GM12878 (cell line): ENCODE measurements at regions of chr19 and their contacts with region 1.

Region 1: DNA sequence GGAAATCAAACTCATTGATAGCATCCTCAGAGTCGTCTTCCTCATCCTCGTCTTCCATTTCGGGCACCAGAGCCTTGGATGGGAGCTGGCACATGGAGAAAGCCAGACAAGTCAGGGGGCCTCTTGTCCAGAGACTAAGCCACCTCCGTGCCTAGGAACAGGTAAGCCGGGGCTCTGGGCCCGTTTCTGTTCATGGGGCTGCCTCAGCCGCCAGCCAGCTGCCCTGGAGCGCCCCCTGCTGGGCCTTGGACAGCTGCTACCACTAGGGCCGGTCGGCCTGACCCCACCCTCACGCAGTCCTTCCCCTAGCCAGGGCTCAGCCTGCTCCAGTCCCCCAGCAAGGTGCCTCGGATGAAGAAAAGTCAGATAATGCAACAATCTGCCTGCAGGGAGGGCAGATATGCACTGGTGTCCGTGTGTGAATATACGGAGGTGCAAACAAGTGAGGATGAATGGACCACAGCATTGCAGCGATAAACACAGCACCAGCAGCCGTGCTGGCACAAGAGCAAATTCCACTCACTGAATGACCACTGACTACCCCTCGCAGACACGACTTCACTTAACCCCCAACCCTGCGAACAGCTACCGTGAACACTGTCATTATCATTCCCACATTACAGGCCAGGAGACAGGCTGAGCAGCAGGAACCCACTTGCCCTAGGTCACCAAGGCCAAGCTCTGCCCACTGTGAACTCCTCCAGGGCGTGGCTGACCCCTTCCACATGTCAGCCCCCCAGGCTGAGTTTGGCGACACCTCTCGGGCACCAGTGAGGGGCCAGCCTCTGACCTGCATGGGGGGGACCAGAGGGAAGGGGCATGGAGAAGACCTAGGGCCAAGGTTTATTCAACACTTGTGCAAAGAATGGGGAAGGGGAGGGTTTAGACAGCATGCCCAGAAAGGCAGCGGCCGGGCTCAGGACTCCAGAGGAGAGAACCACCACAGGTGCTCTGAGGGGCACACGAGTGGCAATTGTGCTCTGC is 12.1 kb upstream of the PRKD2 start:
- DNase-seq: no peak
- ATAC-seq: peak; percentile 97
- H3K4me3 ChIP-seq: no peak overlapping the region
- H3K27ac ChIP-seq: no peak overlapping the region
- H3K4me1 ChIP-seq: peaks cover 10% of the 10 kb centered on the region
- H3K27me3 ChIP-seq: no peaks in the 10 kb centered on the region
- CTCF ChIP-seq: peak; percentile 85 to 96 (median 91)
- EP300 ChIP-seq: no peak
- POLR2A ChIP-seq: peak; percentile 32
- RAD21 ChIP-seq: peak; percentile 75

Region 2: GRCh38 chr19:46564701-46565100 is 164.3 kb before region 1 on chr19:
- CTCF ChIA-PET with region 1: no interaction called
- POLR2A ChIA-PET with region 1: no interaction called
- RAD21 ChIA-PET with region 1: no interaction called
- SMC1A ChIA-PET with region 1: no interaction called
- in situ Hi-C with region 1: no loop called
- intact Hi-C with region 1: no loop called
- DNase-seq: no peak
- ATAC-seq: no peak
- H3K4me3 ChIP-seq: no peak overlapping the region
- H3K27ac ChIP-seq: no peak overlapping the region
- H3K4me1 ChIP-seq: no peaks in the 10 kb centered on the region
- H3K27me3 ChIP-seq: no peaks in the 10 kb centered on the region
- CTCF ChIP-seq: no peak
- EP300 ChIP-seq: no peak
- POLR2A ChIP-seq: no peak
- RAD21 ChIP-seq: no peak

Region 3: GRCh38 chr19:46692918-46693722 is 35.9 kb before region 1 on chr19:
- CTCF ChIA-PET with region 1: interaction called, 3 read pairs
- POLR2A ChIA-PET with region 1: no interaction called
- RAD21 ChIA-PET with region 1: no interaction called
- SMC1A ChIA-PET with region 1: interaction called, 3 read pairs
- in situ Hi-C with region 1: no loop called
- intact Hi-C with region 1: loop called (anchors 5 kb)
- DNase-seq: no peak
- ATAC-seq: no peak
- H3K4me3 ChIP-seq: no peak overlapping the region
- H3K27ac ChIP-seq: no peak overlapping the region
- H3K4me1 ChIP-seq: no peaks in the 10 kb centered on the region
- H3K27me3 ChIP-seq: no peaks in the 10 kb centered on the region
- CTCF ChIP-seq: no peak
- EP300 ChIP-seq: no peak
- POLR2A ChIP-seq: no peak; the same call in 1 of the 2 replicates
- RAD21 ChIP-seq: no peak

Region 4: DNA sequence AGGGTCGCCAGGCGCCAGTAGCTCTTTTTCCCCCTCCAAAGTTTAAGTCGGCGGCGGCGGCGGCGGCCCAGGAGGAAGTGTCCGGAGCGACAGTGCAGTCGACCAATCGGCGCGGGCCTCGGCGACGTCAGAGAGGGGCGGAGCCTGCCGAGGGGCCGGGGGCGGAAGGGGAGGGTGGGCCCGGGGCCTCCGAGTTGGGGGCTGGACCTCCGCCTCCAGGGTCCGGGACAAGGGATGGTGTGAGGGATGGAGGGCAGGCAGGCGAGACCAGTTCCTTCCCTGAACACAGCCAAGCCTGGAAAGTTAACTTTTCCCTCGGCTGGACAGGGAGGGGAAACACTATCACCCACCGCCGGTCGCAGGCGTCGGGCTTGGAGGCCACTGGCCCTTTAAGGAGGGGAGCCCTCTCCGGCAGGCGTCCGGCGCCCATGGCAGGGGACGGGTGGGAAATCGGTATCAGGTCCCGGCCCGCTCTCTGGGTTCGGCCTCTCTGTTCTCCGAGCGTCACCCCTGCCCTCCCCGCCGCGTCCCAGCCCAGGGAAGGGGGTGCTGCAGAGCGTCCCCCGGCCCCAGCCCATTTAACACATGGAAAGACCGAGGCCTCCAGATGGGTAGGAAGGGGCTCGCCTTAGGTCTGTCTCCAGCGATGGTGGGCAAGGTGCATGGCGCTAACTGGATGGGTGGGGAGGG is 11.8 kb before region 1 on chr19 and contains the start of gene PRKD2:
- CTCF ChIA-PET with region 1: interaction called, 32 read pairs
- POLR2A ChIA-PET with region 1: interaction called, 5 read pairs
- RAD21 ChIA-PET with region 1: interaction called, 5 read pairs
- SMC1A ChIA-PET with region 1: interaction called, 4 read pairs
- in situ Hi-C with region 1: no loop called
- intact Hi-C with region 1: no loop called
- DNase-seq: no peak
- ATAC-seq: peak; percentile 67
- H3K4me3 ChIP-seq: peak within 1 kb of the TSS; percentile 91
- H3K27ac ChIP-seq: peak within 1 kb of the TSS; percentile 88
- H3K4me1 ChIP-seq: peaks cover 30% of the 10 kb centered on the region
- H3K27me3 ChIP-seq: no peaks in the 10 kb centered on the region
- CTCF ChIP-seq: no peak
- EP300 ChIP-seq: no peak
- POLR2A ChIP-seq: peak; percentile 72
- RAD21 ChIP-seq: no peak
- polyA plus RNA-seq, gene PRKD2: 2.3 to 11.8 TPM

Region 5: GRCh38 chr19:46746281-46747013 is 17.5 kb after region 1 on chr19 and contains the start of gene STRN4:
- CTCF ChIA-PET with region 1: interaction called, 11 read pairs
- POLR2A ChIA-PET with region 1: no interaction called
- RAD21 ChIA-PET with region 1: no interaction called
- SMC1A ChIA-PET with region 1: no interaction called
- in situ Hi-C with region 1: no loop called
- intact Hi-C with region 1: no loop called
- DNase-seq: no peak
- ATAC-seq: peak; percentile 49
- H3K4me3 ChIP-seq: peak within 1 kb of the TSS; percentile 100
- H3K27ac ChIP-seq: peak within 1 kb of the TSS; percentile 83
- H3K4me1 ChIP-seq: peaks cover 17% of the 10 kb centered on the region
- H3K27me3 ChIP-seq: no peaks in the 10 kb centered on the region
- CTCF ChIP-seq: no peak
- EP300 ChIP-seq: no peak
- POLR2A ChIP-seq: peak; percentile 66
- RAD21 ChIP-seq: no peak
- polyA plus RNA-seq, gene STRN4: 0.42 to 1.6 TPM